SK-N-SH (cell line): ENCODE measurements at regions of chr7 and their contacts with region 1.

Region 1: DNA sequence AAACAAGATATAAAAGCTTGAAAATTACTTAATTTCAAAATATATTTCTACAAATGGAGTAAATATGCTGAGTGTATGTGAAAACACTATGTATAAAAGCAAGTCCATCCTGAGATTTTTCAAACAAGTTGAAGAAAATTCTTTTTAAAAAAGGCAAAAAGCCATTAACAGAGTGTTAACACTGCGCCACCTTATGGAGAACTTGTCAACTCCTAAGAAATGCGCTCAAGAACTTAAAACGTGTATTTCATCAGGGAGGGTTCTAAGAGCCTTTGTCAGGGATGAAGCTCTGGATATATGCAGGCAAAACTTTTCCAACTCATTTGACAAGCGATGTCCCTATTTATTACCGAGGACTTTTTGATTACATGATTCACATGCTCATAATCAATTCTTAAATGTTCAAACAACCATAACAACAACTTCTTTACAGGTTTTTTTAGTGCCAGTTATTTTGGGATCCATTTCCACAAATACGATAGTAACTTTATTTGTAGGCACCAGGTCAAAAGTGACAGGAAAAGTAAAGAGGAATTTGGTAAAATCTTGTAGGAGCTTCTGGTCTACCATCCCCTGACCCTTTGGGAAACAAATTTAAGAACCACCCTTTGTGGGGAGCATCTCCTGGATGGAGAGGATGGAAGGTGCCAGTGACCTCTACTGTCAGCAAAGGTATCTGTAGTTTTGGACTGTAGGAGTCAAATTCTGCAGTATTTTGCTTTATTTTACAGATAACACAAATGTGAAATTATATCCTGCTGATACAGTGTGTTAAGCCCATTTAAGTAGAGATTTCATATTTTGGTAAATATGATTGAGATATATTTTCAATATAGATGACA is 23.2 kb downstream of the CALCR start:
- DNase-seq: no peak
- H3K4me3 ChIP-seq: no peak overlapping the region; a peak in 1 of 4 replicates
- H3K27ac ChIP-seq: no peak overlapping the region
- H3K4me1 ChIP-seq: no peaks in the 10 kb centered on the region
- H3K27me3 ChIP-seq: no peaks in the 10 kb centered on the region
- CTCF ChIP-seq: peak; percentile 88
- EP300 ChIP-seq: no peak
- RAD21 ChIP-seq: peak; percentile 73

Region 2: GRCh38 chr7:93245525-93246432 is 305.5 kb before region 1 on chr7:
- CTCF ChIA-PET with region 1: interaction called, 88 read pairs
- POLR2A ChIA-PET with region 1: no interaction called
- DNase-seq: peak; percentile 27
- H3K4me3 ChIP-seq: no peak overlapping the region
- H3K27ac ChIP-seq: no peak overlapping the region
- H3K4me1 ChIP-seq: peaks cover 0 to 3% of the 10 kb centered on the region in 2 experiments; a peak in 1 of 4 replicates
- H3K27me3 ChIP-seq: no peaks in the 10 kb centered on the region
- CTCF ChIP-seq: peak; percentile 90
- EP300 ChIP-seq: no peak
- RAD21 ChIP-seq: peak; percentile 86

Region 3: GRCh38 chr7:93442478-93443224 is 108.6 kb before region 1 on chr7:
- CTCF ChIA-PET with region 1: interaction called, 12 read pairs
- POLR2A ChIA-PET with region 1: no interaction called
- DNase-seq: no peak
- H3K4me3 ChIP-seq: no peak overlapping the region
- H3K27ac ChIP-seq: no peak overlapping the region
- H3K4me1 ChIP-seq: no peaks in the 10 kb centered on the region; a peak in 1 of 4 replicates
- H3K27me3 ChIP-seq: no peaks in the 10 kb centered on the region
- CTCF ChIP-seq: peak; percentile 75
- EP300 ChIP-seq: no peak
- RAD21 ChIP-seq: peak; percentile 45

Region 4: DNA sequence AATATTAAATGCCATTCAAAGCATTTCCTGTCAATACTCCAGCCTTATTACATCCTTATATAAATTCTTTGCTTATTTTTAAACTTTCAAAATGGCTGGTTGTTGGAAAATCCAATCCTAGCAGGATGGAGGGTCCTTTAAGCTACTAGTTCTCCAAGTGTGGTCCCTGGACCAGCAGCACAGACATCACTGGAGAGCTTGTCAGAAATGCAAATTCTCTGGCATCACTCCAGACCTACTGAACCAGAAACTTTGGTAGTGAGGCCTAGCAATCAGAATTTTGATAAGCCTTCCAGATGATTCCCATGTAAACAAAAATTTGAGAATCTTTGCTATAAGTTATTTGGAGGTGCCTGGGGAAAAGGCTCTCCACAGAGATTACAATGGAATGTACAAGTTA is 20.6 kb before region 1 on chr7:
- CTCF ChIA-PET with region 1: interaction called, 13 read pairs
- POLR2A ChIA-PET with region 1: no interaction called
- DNase-seq: no peak
- H3K4me3 ChIP-seq: no peak overlapping the region
- H3K27ac ChIP-seq: no peak overlapping the region
- H3K4me1 ChIP-seq: no peaks in the 10 kb centered on the region
- H3K27me3 ChIP-seq: no peaks in the 10 kb centered on the region
- CTCF ChIP-seq: no peak
- EP300 ChIP-seq: no peak
- RAD21 ChIP-seq: no peak

Region 5: GRCh38 chr7:93566876-93567275 is 15.6 kb after region 1 on chr7:
- CTCF ChIA-PET with region 1: interaction called, 29 read pairs
- POLR2A ChIA-PET with region 1: no interaction called
- DNase-seq: no peak
- H3K4me3 ChIP-seq: no peak overlapping the region
- H3K27ac ChIP-seq: no peak overlapping the region
- H3K4me1 ChIP-seq: no peaks in the 10 kb centered on the region
- H3K27me3 ChIP-seq: peaks cover 8% of the 10 kb centered on the region; the same call in 1 of the 2 replicates
- CTCF ChIP-seq: no peak
- EP300 ChIP-seq: no peak
- RAD21 ChIP-seq: no peak

Region 6: GRCh38 chr7:93574646-93575554 is 23.6 kb after region 1 on chr7 and contains the start of gene CALCR:
- CTCF ChIA-PET with region 1: interaction called, 29 read pairs
- POLR2A ChIA-PET with region 1: no interaction called
- DNase-seq: peak; percentile 71
- H3K4me3 ChIP-seq: peak within 1 kb of the TSS in 1 of 2 experiments; percentile 33; a peak in 2 of 4 replicates
- H3K27ac ChIP-seq: no peak within 1 kb of the TSS
- H3K4me1 ChIP-seq: peaks cover 0 to 12% of the 10 kb centered on the region in 2 experiments; a peak in 1 of 4 replicates
- H3K27me3 ChIP-seq: peaks cover 28% of the 10 kb centered on the region
- CTCF ChIP-seq: no peak
- EP300 ChIP-seq: no peak
- RAD21 ChIP-seq: no peak
- polyA plus RNA-seq, gene CALCR: 0.06 and 0.12 TPM in 2 replicates

Region 7: DNA sequence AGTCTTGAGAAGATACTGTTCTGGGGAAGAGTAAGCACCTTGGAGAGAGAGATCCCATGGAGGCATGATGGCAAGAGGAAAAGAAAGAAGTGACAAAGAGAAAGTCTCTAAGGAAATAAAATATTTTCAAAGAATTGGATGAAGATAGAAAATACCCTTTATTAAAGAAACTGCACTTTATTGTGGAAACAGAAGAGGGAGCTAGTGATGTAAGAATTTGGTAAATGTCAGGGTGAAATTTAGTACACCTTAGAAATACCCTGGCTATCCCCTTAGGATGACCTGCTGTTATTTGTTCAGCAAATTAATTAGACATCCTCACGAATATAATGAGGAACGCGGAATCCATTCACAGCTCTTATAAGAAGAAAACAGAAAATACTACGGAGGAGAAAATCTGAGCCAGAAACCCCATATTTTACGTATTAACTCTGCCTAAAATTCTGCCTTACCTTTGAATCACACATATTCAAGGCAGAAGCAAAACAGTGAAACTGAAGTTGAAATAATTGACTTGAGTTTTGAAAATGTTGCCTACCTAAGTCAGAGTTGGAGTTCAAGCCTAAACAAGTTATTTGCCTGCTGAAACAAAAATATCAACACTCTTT is 248.6 kb after region 1 on chr7:
- CTCF ChIA-PET with region 1: no interaction called
- POLR2A ChIA-PET with region 1: no interaction called
- DNase-seq: peak; percentile 17
- H3K4me3 ChIP-seq: no peak overlapping the region
- H3K27ac ChIP-seq: no peak overlapping the region
- H3K4me1 ChIP-seq: no peaks in the 10 kb centered on the region
- H3K27me3 ChIP-seq: no peaks in the 10 kb centered on the region
- CTCF ChIP-seq: peak; percentile 85
- EP300 ChIP-seq: no peak
- RAD21 ChIP-seq: peak; percentile 69

Region 8: DNA sequence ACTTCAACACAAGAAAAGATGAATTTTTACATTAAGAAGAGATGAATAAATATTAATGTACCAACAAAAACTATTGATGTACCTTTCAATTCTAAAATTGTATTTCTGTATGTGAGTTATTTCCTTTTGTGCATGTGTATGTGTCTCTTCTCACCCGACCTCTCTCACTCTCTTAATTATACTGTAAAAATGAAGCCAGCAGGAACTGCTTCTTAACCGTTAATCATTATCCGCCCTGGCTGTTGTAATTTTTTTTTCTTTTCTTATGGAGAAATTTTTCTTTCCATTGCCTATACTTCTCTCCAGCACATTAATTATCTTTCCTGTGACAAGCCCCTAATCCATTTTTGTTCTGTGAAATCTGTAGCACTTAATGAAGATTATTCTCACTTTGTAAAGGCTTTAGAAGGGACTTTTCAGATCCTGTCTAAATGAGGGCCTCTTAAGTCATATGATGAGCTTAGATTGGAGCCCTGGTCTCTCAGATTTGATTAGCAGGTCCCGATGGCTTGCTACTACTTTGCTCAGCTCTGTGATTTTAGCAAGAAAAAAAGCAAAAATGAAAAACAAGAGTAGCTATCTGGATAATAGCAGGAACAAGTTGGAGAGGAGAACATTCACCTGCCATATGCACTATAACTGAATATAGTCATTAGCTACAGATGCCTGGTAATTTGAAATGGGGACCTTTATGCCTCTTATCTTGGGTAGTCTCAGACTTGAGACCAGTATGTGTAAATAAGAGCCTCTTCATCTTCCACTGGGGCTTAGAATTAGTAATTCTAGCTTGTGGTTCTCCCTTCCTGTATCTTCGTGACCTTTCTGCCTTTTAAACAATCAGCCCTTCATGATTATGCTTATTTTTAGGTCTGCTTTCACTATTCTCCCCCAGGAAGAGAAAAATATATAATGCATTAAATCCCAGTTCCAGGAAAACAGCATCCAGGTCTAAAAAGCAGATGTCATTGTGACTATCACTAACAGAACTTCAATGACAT is 763.4 kb after region 1 on chr7:
- CTCF ChIA-PET with region 1: no interaction called
- POLR2A ChIA-PET with region 1: no interaction called
- DNase-seq: no peak
- H3K4me3 ChIP-seq: no peak overlapping the region
- H3K27ac ChIP-seq: peak overlapping the region; percentile 72 to 80
- H3K4me1 ChIP-seq: peaks cover 12 to 29% of the 10 kb centered on the region in 2 experiments
- H3K27me3 ChIP-seq: no peaks in the 10 kb centered on the region
- CTCF ChIP-seq: no peak
- EP300 ChIP-seq: no peak
- RAD21 ChIP-seq: no peak